GM18951 (cell line): ENCODE measurements at regions of chr16 and their contacts with region 1.

Region 1: GRCh38 chr16:29729116-29729521 is 16.7 kb downstream of the C16orf54 start:
- POLR2A ChIP-seq: no peak

Region 2: GRCh38 chr16:29784901-29785500 is 55.9 kb after region 1 on chr16:
- in situ Hi-C with region 1: loop called (anchors 10 kb)
- POLR2A ChIP-seq: no peak